Dorsolateral prefrontal cortex (tissue), 120 donors: ENCODE measurements at regions of chr15 and their contacts with region 1.

Region 1: GRCh38 chr15:23857028-23857641 is 170.0 kb upstream of the NDN start:
- DNase-seq: peak in 4 of 10 donors; percentile 37 to 55 (median 46)
- H3K4me3 ChIP-seq: no peak overlapping the region
- H3K27ac ChIP-seq: no peak overlapping the region
- H3K27me3 ChIP-seq: peaks cover 0 to 44% (median 12%) of the 10 kb centered on the region in 45 donors
- CTCF ChIP-seq: peak in 54 of 56 donors; percentile 27 to 77 (median 60)

Region 2: GRCh38 chr15:23648920-23649515 is 208.1 kb before region 1 on chr15:
- intact Hi-C with region 1: loop called in 1 of 2 experiments (anchors 5 kb)
- DNase-seq: peak in 6 of 10 donors; percentile 35 to 59 (median 51)
- H3K4me3 ChIP-seq: peak overlapping the region in 17 of 59 donors; percentile 9 to 70 (median 57)
- H3K27ac ChIP-seq: no peak overlapping the region
- H3K27me3 ChIP-seq: peaks cover 0 to 17% (median 0%) of the 10 kb centered on the region in 45 donors
- CTCF ChIP-seq: peak; percentile 35 to 81 (median 68)

Region 3: GRCh38 chr15:23828786-23829185 is 28.3 kb before region 1 on chr15:
- intact Hi-C with region 1: no loop called
- DNase-seq: no peak
- H3K4me3 ChIP-seq: no peak overlapping the region
- H3K27ac ChIP-seq: no peak overlapping the region
- H3K27me3 ChIP-seq: peaks cover 0 to 30% (median 0%) of the 10 kb centered on the region in 45 donors
- CTCF ChIP-seq: no peak